Esophagus muscularis mucosa (tissue), 4 donors: ENCODE measurements at regions of chr4 and their contacts with region 1.

Region 1: GRCh38 chr4:155758481-155759404 is at the start of gene GUCY1B1:
- DNase-seq: peak; percentile 95
- H3K4me3 ChIP-seq: peak within 1 kb of the TSS; percentile 68 to 91 (median 76)
- H3K27ac ChIP-seq: peak within 1 kb of the TSS; percentile 88 to 95 (median 90)
- H3K4me1 ChIP-seq: peaks cover 3 to 35% (median 33%) of the 10 kb centered on the region in 4 donors
- H3K27me3 ChIP-seq: no peaks in the 10 kb centered on the region
- CTCF ChIP-seq: peak; percentile 30 to 67 (median 36)
- EP300 ChIP-seq: no peak
- POLR2A ChIP-seq: peak; percentile 11
- total RNA-seq, gene GUCY1B1: 30.6 to 61.9 (median 41.6) TPM

Region 2: GRCh38 chr4:155529272-155529671 is 229.5 kb before region 1 on chr4:
- intact Hi-C with region 1: loop called (anchors 10 kb)
- DNase-seq: no peak
- H3K4me3 ChIP-seq: no peak overlapping the region
- H3K27ac ChIP-seq: no peak overlapping the region
- H3K4me1 ChIP-seq: peaks cover 9 to 45% (median 41%) of the 10 kb centered on the region in 4 donors
- H3K27me3 ChIP-seq: no peaks in the 10 kb centered on the region
- CTCF ChIP-seq: peak in 1 of 3 experiments; percentile 7
- EP300 ChIP-seq: no peak
- POLR2A ChIP-seq: no peak